ENCODE measurements at regions of chr10 and their contacts with region 1.

Region 1: GRCh38 chr10:12042797-12043651 is at the start of gene UPF2:
- DNase-seq: peak; percentile 98
- H3K4me3 Mint-ChIP-seq: peak within 1 kb of the TSS; percentile 95
- H3K27ac Mint-ChIP-seq: peak within 1 kb of the TSS; percentile 100
- H3K4me1 Mint-ChIP-seq: peaks cover 32% of the 10 kb centered on the region
- H3K27me3 Mint-ChIP-seq: peaks cover 4% of the 10 kb centered on the region
- total RNA-seq, gene UPF2: 38.9 and 41.4 TPM in 2 replicates

Region 2: DNA sequence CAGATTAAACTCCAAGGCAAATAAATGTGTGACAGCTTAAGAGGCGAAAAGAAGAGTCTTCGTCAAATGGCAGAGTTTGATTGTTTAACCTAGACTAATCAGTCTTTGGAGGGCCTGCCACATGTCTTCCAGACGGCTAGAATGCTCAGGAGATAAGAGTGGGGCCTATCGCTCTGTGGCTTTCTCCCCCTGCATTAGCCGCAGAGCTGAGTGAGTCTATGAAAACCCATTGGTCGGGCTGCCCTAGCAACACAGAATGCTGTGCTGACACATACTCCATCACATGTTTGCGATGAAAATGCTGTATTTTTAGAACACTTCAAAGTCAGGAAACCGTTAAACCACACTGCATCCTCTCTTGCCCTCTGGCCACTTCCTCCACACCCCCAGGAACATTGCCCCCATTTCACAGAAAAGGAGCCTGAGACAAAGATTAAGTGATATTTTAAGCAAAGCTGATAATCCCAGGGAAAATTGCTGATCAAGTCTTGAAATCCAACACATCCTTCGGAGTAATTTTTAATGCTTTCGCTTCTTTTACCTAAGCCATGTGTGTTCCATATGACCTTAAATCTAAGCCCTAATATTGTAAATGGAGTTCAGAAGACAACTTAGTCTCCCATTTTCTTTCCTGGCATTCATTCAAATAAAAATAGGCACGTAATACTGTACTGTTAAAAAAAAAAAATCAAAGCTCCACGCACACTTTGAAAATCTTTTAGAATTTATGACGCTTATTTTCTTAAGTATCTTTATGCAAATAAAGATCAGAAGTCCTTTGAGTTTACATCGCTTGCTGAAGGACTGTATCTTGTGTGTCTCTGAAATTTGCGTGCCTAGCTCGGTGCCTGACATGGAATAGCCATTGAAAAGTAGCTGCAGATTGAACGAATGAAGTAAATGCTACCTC is 864.2 kb before region 1 on chr10:
- intact Hi-C with region 1: loop called (anchors 10 kb)
- DNase-seq: peak; percentile 96
- H3K4me3 Mint-ChIP-seq: no peak overlapping the region
- H3K27ac Mint-ChIP-seq: peak overlapping the region; percentile 94
- H3K4me1 Mint-ChIP-seq: peaks cover 90% of the 10 kb centered on the region
- H3K27me3 Mint-ChIP-seq: no peaks in the 10 kb centered on the region

Region 3: DNA sequence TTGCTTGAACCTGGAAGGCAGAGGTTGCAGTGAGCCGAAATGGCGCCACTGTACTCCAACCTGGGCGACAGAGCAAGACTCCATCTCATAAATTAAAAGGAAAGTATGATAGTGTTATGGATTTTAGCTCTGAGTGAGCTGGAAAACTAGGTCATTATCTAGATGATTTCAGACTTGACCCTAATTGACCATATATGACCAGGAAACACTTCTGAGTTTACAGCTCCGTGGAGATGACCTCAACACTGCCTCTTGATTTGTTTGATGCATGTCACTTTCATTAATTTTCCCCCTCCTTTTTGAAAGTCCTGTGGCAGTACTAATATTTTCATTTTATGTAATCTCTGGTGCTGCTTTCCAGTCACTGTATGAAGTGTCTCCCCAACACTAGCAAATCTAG is 78.6 kb after region 1 on chr10:
- intact Hi-C with region 1: loop called (anchors 1 kb)
- DNase-seq: no peak
- H3K4me3 Mint-ChIP-seq: peak overlapping the region; percentile 79
- H3K27ac Mint-ChIP-seq: peak overlapping the region; percentile 97
- H3K4me1 Mint-ChIP-seq: peaks cover 27% of the 10 kb centered on the region
- H3K27me3 Mint-ChIP-seq: no peaks in the 10 kb centered on the region

Region 4: GRCh38 chr10:12129222-12130111 is 86.4 kb after region 1 on chr10 and contains the start of gene SEC61A2:
- intact Hi-C with region 1: loop called (anchors 1 kb)
- DNase-seq: peak; percentile 100
- H3K4me3 Mint-ChIP-seq: peak within 1 kb of the TSS; percentile 85
- H3K27ac Mint-ChIP-seq: peak within 1 kb of the TSS; percentile 90
- H3K4me1 Mint-ChIP-seq: peaks cover 30% of the 10 kb centered on the region
- H3K27me3 Mint-ChIP-seq: no peaks in the 10 kb centered on the region
- total RNA-seq, gene SEC61A2: 13.3 and 21.2 TPM in 2 replicates

Region 5: GRCh38 chr10:12186323-12186722 is 143.3 kb after region 1 on chr10:
- intact Hi-C with region 1: no loop called
- DNase-seq: no peak
- H3K4me3 Mint-ChIP-seq: no peak overlapping the region
- H3K27ac Mint-ChIP-seq: peak overlapping the region; percentile 75
- H3K4me1 Mint-ChIP-seq: peaks cover 30% of the 10 kb centered on the region
- H3K27me3 Mint-ChIP-seq: no peaks in the 10 kb centered on the region

Measured in activated CD4-positive, alpha-beta T cell treated with anti-CD3 and anti-CD28 coated beads, Interleukin-2, amount 10 ng/mL, durations not matched to agents 24 days and 14 days (primary cell).